ENCODE measurements at regions of chr7 and their contacts with region 1.

Region 1: GRCh38 chr7:2209146-2209960 is 23.4 kb downstream of the MAD1L1 start:
- DNase-seq: peak; percentile 39
- H3K4me3 Mint-ChIP-seq: no peak overlapping the region
- H3K27ac Mint-ChIP-seq: peak overlapping the region; percentile 66
- H3K4me1 Mint-ChIP-seq: no peaks in the 10 kb centered on the region
- H3K27me3 Mint-ChIP-seq: no peaks in the 10 kb centered on the region
- CTCF ChIP-seq: peak; percentile 57

Region 2: DNA sequence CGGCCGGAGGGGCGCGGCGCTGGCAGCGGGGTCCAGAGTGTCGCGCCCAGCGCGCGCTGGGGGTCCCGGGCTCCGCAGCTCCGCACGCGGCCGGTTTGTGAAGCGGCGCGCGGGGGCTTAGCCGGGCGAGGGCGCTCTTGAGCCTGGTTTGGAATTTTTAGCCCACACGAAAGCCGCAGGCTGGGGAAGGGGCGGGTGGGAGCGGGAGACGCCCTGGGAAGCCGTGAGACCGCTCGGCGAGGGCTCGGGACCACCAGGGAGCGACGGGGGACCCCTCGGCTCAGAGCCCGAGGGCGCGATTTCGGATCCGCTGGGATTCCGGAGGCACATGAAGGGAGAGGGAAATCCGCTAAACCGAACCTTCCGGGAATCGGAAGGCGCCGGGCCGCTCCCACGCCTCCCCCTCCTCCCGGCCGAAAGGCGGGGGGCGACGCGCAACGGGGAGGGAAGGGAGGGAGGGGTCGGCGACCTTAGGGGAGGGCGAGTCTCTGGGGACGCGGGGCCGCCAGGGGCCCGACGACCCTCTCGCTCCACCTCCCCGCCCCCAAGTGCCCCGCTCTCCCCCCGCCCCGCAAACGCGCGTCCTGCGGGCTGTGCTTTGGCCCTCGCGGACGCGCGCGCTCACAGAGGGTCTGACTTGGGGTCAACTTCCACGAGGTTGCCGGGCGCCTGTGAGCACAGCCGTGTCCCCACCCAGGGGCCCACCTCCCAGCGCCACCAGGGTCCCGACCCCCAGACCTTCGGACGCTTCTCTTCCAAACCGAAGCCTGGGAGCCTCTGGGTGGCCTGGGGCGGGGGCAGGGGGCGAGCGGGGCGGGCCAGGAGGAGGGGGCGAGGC is 544.4 kb before region 1 on chr7:
- CTCF ChIA-PET with region 1: no interaction called
- POLR2A ChIA-PET with region 1: no interaction called
- intact Hi-C with region 1: loop called (anchors 10 kb)
- DNase-seq: peak; percentile 29
- H3K4me3 Mint-ChIP-seq: no peak overlapping the region
- H3K27ac Mint-ChIP-seq: no peak overlapping the region
- H3K4me1 Mint-ChIP-seq: no peaks in the 10 kb centered on the region
- H3K27me3 Mint-ChIP-seq: peaks cover 51% of the 10 kb centered on the region
- CTCF ChIP-seq: peak; percentile 49

Region 3: GRCh38 chr7:1812509-1813393 is 396.6 kb before region 1 on chr7:
- CTCF ChIA-PET with region 1: no interaction called
- POLR2A ChIA-PET with region 1: no interaction called
- intact Hi-C with region 1: loop called (anchors 2 kb)
- DNase-seq: peak; percentile 21
- H3K4me3 Mint-ChIP-seq: no peak overlapping the region
- H3K27ac Mint-ChIP-seq: no peak overlapping the region
- H3K4me1 Mint-ChIP-seq: no peaks in the 10 kb centered on the region
- H3K27me3 Mint-ChIP-seq: no peaks in the 10 kb centered on the region
- CTCF ChIP-seq: peak; percentile 30

Region 4: GRCh38 chr7:2093215-2093842 is 116.0 kb before region 1 on chr7:
- CTCF ChIA-PET with region 1: no interaction called
- POLR2A ChIA-PET with region 1: no interaction called
- intact Hi-C with region 1: no loop called
- DNase-seq: no peak
- H3K4me3 Mint-ChIP-seq: no peak overlapping the region
- H3K27ac Mint-ChIP-seq: no peak overlapping the region
- H3K4me1 Mint-ChIP-seq: no peaks in the 10 kb centered on the region
- H3K27me3 Mint-ChIP-seq: no peaks in the 10 kb centered on the region
- CTCF ChIP-seq: no peak

Region 5: DNA sequence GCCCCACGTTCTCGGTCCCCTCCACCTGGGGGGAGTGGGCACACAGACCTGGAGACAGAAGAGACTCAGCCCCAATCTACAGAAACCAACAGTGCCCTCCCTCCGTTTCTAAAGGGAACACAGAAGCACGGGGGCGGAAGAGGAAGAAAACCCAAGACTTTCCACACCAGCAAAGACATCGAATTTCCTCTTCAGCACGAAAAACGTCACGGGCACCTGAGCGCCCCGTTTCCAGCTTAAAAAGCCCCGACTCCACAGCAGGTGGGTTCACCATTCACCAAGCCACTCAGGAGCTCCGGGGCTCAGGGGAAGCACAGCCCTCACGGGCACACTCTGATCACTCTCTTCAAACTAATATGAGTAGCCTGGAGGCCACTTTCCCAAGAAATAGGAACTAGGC is 52.3 kb after region 1 on chr7:
- CTCF ChIA-PET with region 1: no interaction called
- POLR2A ChIA-PET with region 1: no interaction called
- intact Hi-C with region 1: no loop called
- DNase-seq: no peak
- H3K4me3 Mint-ChIP-seq: no peak overlapping the region
- H3K27ac Mint-ChIP-seq: no peak overlapping the region
- H3K4me1 Mint-ChIP-seq: peaks cover 6% of the 10 kb centered on the region
- H3K27me3 Mint-ChIP-seq: no peaks in the 10 kb centered on the region
- CTCF ChIP-seq: no peak